Gastrocnemius medialis (tissue), 4 donors: ENCODE measurements at regions of chr6 and their contacts with region 1.

Region 1: GRCh38 chr6:158743033-158743651 is 76.0 kb downstream of the EZR start:
- DNase-seq: no peak
- ATAC-seq: no peak
- H3K4me3 ChIP-seq: no peak overlapping the region
- H3K27ac ChIP-seq: no peak overlapping the region
- H3K4me1 ChIP-seq: peaks cover 0 to 4% of the 10 kb centered on the region in 2 donors
- H3K27me3 ChIP-seq: no peaks in the 10 kb centered on the region
- CTCF ChIP-seq: no peak
- POLR2A ChIP-seq: no peak

Region 2: DNA sequence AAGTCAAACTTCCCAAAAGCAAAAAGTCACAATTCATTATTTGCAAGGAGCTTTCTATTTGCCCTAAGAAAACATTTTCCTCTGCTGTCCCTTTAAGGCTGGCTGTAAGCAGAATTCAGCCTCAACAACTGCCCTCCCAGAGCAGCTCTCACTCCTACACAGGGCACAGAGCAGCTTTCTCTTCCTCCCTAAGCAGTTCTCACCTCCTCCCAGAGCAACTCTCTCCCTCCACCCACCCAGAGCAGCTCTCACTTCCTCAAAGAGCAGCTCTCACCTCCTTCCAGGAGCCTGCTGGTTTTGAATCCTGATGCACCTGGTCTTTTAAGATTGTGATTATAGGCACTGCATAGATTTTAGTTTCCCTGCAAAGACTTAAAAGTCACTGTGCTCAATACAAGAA is 303.9 kb before region 1 on chr6:
- in situ Hi-C with region 1: no loop called
- intact Hi-C with region 1: no loop called
- DNase-seq: no peak
- ATAC-seq: no peak
- H3K4me3 ChIP-seq: no peak overlapping the region
- H3K27ac ChIP-seq: no peak overlapping the region
- H3K4me1 ChIP-seq: no peaks in the 10 kb centered on the region
- H3K27me3 ChIP-seq: no peaks in the 10 kb centered on the region
- CTCF ChIP-seq: no peak
- POLR2A ChIP-seq: no peak

Region 3: GRCh38 chr6:158704181-158704822 is 38.8 kb before region 1 on chr6:
- in situ Hi-C with region 1: no loop called
- intact Hi-C with region 1: loop called (anchors 2 kb)
- DNase-seq: peak; percentile 41 to 73
- ATAC-seq: peak; percentile 71 to 74
- H3K4me3 ChIP-seq: peak overlapping the region; percentile 37 to 58 (median 46)
- H3K27ac ChIP-seq: peak overlapping the region in 1 of 4 donors; percentile 43
- H3K4me1 ChIP-seq: peaks cover 18 to 24% of the 10 kb centered on the region in 2 donors
- H3K27me3 ChIP-seq: no peaks in the 10 kb centered on the region
- CTCF ChIP-seq: peak in 4 of 5 experiments; percentile 91 to 99 (median 94)
- POLR2A ChIP-seq: no peak

Region 4: GRCh38 chr6:158758451-158758861 is 15.3 kb after region 1 on chr6:
- in situ Hi-C with region 1: no loop called
- intact Hi-C with region 1: no loop called
- DNase-seq: peak in 1 of 2 donors; percentile 46
- ATAC-seq: peak in 1 of 2 donors; percentile 68
- H3K4me3 ChIP-seq: no peak overlapping the region
- H3K27ac ChIP-seq: no peak overlapping the region
- H3K4me1 ChIP-seq: no peaks in the 10 kb centered on the region
- H3K27me3 ChIP-seq: no peaks in the 10 kb centered on the region
- CTCF ChIP-seq: no peak
- POLR2A ChIP-seq: no peak